HCT116 (cell line): ENCODE measurements at regions of chr19 and their contacts with region 1.

Region 1: DNA sequence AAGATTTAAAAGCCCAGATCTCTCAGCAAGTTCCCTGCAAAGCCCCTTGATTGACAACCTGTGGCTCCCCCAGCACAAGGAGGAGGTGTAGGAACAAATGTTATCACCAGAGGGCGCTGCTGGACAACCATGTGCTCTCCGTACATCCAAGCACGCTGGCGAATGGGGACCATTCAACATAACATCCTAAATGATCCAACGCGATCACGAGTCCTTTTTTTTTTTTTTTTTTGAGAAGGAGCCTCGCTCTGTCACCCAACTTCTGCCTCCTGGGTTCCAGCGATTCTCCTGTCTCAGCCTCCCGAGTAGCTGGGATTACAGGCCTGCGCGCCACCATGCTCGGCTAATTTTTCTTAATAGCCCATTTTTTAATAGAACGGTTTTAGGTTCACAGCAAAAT is 52.0 kb downstream of the NWD1 start:
- DNase-seq: peak; percentile 79
- ATAC-seq: peak; percentile 98
- H3K4me3 ChIP-seq: no peak overlapping the region
- H3K27ac ChIP-seq: no peak overlapping the region
- H3K4me1 ChIP-seq: 0 out of 4 replicates have a peak, but pooled peaks cover 0 to 2% of the 10 kb centered on the region in 2 experiments
- H3K27me3 ChIP-seq: no peaks in the 10 kb centered on the region
- CTCF ChIP-seq: peak; percentile 74 to 85 (median 81)
- POLR2A ChIP-seq: no peak
- RAD21 ChIP-seq: peak; percentile 90

Region 2: GRCh38 chr19:16608290-16608739 is 163.3 kb before region 1 on chr19:
- CTCF ChIA-PET with region 1: no interaction called
- POLR2A ChIA-PET with region 1: no interaction called
- RAD21 ChIA-PET with region 1: no interaction called
- intact Hi-C with region 1: no loop called
- DNase-seq: no peak
- ATAC-seq: no peak
- H3K4me3 ChIP-seq: no peak overlapping the region
- H3K27ac ChIP-seq: no peak overlapping the region
- H3K4me1 ChIP-seq: peaks cover 3 to 20% of the 10 kb centered on the region in 2 experiments; a peak in 3 of 4 replicates
- H3K27me3 ChIP-seq: no peaks in the 10 kb centered on the region
- CTCF ChIP-seq: no peak
- POLR2A ChIP-seq: no peak
- RAD21 ChIP-seq: no peak

Region 3: GRCh38 chr19:16899566-16900075 is 128.0 kb after region 1 on chr19:
- CTCF ChIA-PET with region 1: no interaction called
- POLR2A ChIA-PET with region 1: no interaction called
- RAD21 ChIA-PET with region 1: no interaction called
- intact Hi-C with region 1: loop called (anchors 2 kb)
- DNase-seq: peak; percentile 35
- ATAC-seq: peak; percentile 88
- H3K4me3 ChIP-seq: no peak overlapping the region
- H3K27ac ChIP-seq: no peak overlapping the region
- H3K4me1 ChIP-seq: peaks cover 2 to 8% of the 10 kb centered on the region in 2 experiments; a peak in 2 of 4 replicates
- H3K27me3 ChIP-seq: no peaks in the 10 kb centered on the region
- CTCF ChIP-seq: peak; percentile 76 to 94 (median 76)
- POLR2A ChIP-seq: no peak
- RAD21 ChIP-seq: peak; percentile 89

Region 4: DNA sequence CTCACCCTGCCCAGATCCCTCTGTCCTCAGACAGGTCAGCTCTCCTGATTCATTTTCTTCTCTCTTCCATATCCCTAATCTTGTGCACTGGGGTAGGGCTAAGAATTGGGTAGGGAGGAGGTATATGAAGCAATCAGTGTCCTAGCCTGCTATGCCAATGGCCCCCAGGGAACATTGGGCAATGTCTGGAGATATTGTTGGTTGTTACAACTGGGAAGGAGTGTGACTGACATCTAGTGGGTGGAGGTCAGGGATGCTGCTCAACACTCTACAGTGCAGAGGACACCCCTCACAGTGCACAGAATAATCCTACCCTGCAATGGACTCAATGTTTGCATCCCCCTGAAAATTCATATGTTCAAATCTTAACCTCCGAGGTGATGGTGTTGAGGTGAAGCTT is 197.5 kb after region 1 on chr19:
- CTCF ChIA-PET with region 1: no interaction called
- POLR2A ChIA-PET with region 1: no interaction called
- RAD21 ChIA-PET with region 1: no interaction called
- intact Hi-C with region 1: loop called (anchors 5 kb)
- DNase-seq: no peak
- ATAC-seq: peak; percentile 87
- H3K4me3 ChIP-seq: no peak overlapping the region
- H3K27ac ChIP-seq: no peak overlapping the region
- H3K4me1 ChIP-seq: no peaks in the 10 kb centered on the region
- H3K27me3 ChIP-seq: no peaks in the 10 kb centered on the region
- CTCF ChIP-seq: peak; percentile 4 to 37 (median 34); a peak in 3 of 6 replicates
- POLR2A ChIP-seq: no peak
- RAD21 ChIP-seq: peak; percentile 41; the same call in 1 of the 2 replicates

Region 5: DNA sequence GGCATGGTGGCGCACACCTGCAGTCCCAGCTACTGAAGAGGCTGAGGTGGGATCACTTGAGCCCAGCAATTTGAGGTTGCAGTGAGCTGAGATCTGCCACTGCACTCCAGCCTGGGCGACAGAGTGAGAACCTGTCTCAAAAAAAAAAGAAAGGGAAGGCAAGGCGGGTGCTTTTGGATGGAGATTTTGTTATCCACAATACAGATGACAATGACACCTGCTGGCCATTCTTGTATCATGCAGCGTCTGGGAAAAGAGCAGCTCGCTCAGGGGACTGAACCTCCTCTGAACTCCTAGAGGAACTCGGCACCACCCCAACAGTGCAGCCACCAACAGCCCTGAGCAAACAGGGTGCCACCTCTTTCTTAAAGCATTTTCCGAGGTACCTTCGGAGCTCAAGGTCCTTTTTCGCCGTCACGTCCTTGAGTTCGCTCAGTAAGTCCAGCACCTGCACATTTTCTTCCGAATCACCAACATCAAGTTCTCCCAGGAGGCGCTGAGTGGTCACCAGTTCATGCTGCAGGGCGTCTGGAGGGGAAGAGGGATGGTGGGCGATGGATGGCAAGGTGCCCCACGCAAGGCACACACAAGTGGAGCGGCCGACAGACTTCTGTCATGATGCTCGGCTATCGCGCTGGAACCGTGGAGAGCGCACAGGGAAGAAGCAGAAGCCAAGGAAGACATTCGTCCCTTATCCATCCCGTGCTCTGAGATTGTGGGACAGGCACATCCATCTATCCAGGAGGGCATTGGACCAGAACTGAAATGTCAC is 281.0 kb after region 1 on chr19:
- CTCF ChIA-PET with region 1: interaction called, 10 read pairs
- POLR2A ChIA-PET with region 1: no interaction called
- RAD21 ChIA-PET with region 1: no interaction called
- intact Hi-C with region 1: loop called (anchors 1 kb)
- DNase-seq: peak; percentile 22
- ATAC-seq: peak; percentile 69; the same call in 1 of the 2 replicates
- H3K4me3 ChIP-seq: no peak overlapping the region
- H3K27ac ChIP-seq: no peak overlapping the region
- H3K4me1 ChIP-seq: no peaks in the 10 kb centered on the region
- H3K27me3 ChIP-seq: no peaks in the 10 kb centered on the region
- CTCF ChIP-seq: peak; percentile 58 to 66 (median 58); a peak in 5 of 6 replicates
- POLR2A ChIP-seq: no peak
- RAD21 ChIP-seq: peak; percentile 78